Mammary epithelial cell (primary cell): ENCODE measurements at regions of chr9 and their contacts with region 1.

Region 1: GRCh38 chr9:98315551-98316060 is 60.2 kb upstream of the TBC1D2 start:
- DNase-seq: peak; percentile 60
- H3K4me3 ChIP-seq: no peak overlapping the region
- H3K27ac ChIP-seq: no peak overlapping the region
- H3K4me1 ChIP-seq: peaks cover 3% of the 10 kb centered on the region
- H3K27me3 ChIP-seq: no peaks in the 10 kb centered on the region
- CTCF ChIP-seq: peak; percentile 96 to 98

Region 2: DNA sequence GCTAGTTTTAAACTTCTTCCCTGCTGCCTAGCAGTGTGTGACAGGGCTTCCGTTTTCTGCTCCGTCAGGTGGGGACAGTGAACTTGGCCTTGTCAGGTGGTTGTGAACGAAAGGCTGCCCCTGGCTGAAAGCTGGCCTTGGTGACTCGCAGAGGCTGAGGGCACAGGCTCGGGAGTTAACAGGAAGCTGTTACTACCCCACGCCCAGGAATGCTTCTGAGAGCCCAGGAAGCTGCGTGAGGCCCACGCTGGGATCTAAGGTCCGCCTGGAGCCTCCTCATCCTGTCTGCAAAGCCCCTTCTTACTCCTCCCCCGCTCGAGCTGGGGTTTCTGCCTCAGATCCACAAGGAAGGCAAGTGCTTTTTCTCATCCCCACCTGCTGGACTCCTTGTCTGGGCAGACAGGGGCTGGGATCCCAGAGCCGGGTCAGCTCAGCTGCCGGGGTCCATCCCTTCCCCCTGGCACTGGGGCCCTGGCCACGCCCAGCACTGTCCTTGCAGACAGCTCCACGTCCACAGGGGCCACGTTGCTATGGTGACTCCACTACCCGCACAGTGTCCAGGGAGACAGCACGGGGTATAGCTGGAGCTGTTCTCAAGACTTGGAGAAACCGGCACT is 64.6 kb after region 1 on chr9:
- CTCF ChIA-PET with region 1: no interaction called
- dilution Hi-C with region 1: no loop called
- in situ Hi-C with region 1: no loop called
- intact Hi-C with region 1: no loop called
- DNase-seq: no peak
- H3K4me3 ChIP-seq: no peak overlapping the region
- H3K27ac ChIP-seq: no peak overlapping the region
- H3K4me1 ChIP-seq: peaks cover 2% of the 10 kb centered on the region
- H3K27me3 ChIP-seq: no peaks in the 10 kb centered on the region
- CTCF ChIP-seq: no peak

Region 3: GRCh38 chr9:98536542-98537173 is 221.1 kb after region 1 on chr9:
- CTCF ChIA-PET with region 1: no interaction called
- dilution Hi-C with region 1: no loop called
- in situ Hi-C with region 1: loop called in 1 of 2 experiments (anchors 25 kb)
- intact Hi-C with region 1: no loop called
- DNase-seq: no peak
- H3K4me3 ChIP-seq: no peak overlapping the region
- H3K27ac ChIP-seq: no peak overlapping the region
- H3K4me1 ChIP-seq: no peaks in the 10 kb centered on the region
- H3K27me3 ChIP-seq: no peaks in the 10 kb centered on the region
- CTCF ChIP-seq: peak; percentile 20 to 40

Region 4: DNA sequence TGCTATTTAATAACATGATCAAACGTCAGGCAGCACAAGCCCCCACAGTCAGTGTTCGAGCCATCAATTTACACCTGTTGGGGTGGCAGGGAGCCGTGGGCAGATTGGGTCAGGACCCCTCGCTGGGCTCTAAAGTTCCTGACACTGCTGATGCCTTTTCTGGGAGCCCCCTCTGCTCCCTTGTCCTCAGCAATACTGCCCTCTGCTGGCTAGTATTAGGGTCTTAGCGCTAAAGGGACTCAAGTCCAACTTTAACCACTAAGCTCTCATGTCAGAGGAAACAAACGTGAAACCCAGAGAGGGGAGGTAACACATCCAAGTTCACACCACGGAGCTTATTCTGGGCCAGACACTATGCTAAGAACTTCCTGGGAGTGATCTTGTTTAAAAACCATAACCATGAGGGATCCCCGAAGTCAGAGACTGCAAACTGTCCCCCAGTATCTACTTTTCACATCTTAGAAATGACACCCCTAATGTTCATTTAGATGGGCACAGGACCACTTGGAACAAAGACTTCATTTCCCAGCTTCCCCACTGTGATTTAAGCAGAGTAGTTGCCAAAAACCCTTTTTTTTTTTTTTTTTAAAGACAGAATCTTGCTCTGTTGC is 460.3 kb after region 1 on chr9:
- CTCF ChIA-PET with region 1: no interaction called
- dilution Hi-C with region 1: no loop called
- in situ Hi-C with region 1: loop called (anchors 10 kb)
- intact Hi-C with region 1: loop called (anchors 1 kb)
- DNase-seq: peak; percentile 20
- H3K4me3 ChIP-seq: no peak overlapping the region
- H3K27ac ChIP-seq: no peak overlapping the region
- H3K4me1 ChIP-seq: no peaks in the 10 kb centered on the region
- H3K27me3 ChIP-seq: no peaks in the 10 kb centered on the region
- CTCF ChIP-seq: peak; percentile 80 to 83

Region 5: DNA sequence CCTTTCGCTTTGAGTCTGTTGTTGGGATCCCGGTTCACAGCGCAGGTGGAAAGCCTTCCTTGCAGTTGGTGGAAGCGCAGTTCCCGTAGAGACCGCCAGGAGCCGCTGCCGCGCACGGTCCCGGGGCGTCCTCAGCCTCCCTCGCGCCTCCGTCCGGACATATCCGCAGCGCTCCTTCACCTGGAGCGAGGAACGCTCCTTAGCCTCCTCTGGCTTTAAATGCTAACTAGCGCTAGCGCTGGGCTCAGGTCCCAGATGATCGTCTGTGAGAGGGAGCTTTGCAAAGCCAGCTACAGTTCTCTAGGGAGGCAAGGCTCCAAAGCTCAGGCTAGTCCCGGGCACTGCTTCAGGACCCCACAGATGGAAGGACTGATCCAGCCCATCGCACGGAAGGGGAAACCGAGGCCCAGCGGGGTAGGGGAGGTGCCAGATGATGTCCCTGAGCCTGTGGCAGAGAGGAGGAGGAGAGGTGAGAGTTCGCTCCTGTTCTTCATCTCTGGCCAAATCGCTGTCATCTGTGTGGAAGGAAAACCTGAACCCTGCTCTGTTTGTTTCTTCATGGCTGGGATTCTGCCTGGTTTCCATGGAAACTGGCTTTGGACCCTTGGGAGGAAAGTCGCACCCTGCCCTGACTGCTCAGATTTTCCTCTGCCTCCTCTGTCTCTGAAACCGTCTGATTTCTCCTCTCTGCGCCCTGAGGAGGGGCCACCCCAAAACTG is 659.5 kb after region 1 on chr9:
- CTCF ChIA-PET with region 1: no interaction called
- dilution Hi-C with region 1: no loop called
- in situ Hi-C with region 1: loop called in 1 of 2 experiments (anchors 25 kb)
- intact Hi-C with region 1: loop called (anchors 1 kb)
- DNase-seq: peak; percentile 66
- H3K4me3 ChIP-seq: peak overlapping the region in 1 of 3 experiments; percentile 10
- H3K27ac ChIP-seq: no peak overlapping the region
- H3K4me1 ChIP-seq: peaks cover 10% of the 10 kb centered on the region
- H3K27me3 ChIP-seq: no peaks in the 10 kb centered on the region
- CTCF ChIP-seq: peak; percentile 96 to 99